ENCODE measurements at regions of chr16 and their contacts with region 1.

Region 1: DNA sequence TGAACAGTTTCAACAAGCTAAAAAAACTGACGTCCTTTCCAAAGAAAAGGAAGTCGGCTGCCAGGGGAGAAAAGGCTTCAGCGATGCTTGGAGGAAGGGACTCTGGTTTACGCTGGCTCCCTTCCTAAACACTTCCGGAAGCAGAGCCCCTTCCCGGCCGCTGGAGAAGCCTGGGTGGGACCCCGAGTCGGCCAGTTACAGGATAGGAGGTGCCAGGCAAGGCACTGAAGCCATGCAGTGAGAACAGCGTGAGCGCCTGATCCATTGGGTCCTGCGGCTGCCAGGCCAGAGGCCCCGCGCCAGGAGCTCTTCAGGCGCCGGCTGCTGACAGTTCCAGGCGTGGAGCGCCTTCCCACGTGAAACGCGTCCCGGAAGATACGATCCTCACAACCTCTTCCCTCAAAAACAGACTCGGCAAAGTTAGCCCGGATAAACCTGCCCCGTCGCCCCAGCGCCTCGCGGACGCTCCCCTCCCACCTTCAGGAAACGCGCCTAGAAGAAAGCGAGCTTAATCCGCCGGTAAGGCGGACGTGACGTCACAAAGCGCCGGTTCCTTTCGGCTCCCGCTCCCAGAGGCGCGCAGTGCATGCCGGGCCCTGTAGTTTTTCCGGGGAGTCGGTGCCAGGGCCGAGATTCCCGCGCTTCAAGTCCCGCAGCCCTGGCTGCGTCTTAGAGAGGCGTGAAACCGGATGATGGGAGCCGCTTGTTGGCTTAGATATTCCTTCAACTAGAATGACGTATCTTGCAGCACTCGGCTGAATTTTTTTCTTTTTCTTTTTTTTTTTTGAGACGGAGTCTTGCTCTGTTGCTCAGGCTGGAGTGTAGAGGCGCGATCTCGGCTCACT is at the start of gene ADAT1:
- DNase-seq: peak; percentile 90
- H3K4me3 ChIP-seq: peak within 1 kb of the TSS; percentile 85
- H3K27ac ChIP-seq: peak within 1 kb of the TSS; percentile 84 to 89
- H3K4me1 ChIP-seq: peaks cover 6 to 14% of the 10 kb centered on the region in 2 experiments; a peak in 3 of 4 replicates
- H3K27me3 ChIP-seq: no peaks in the 10 kb centered on the region
- CTCF ChIP-seq: no peak
- EP300 ChIP-seq: no peak
- RAD21 ChIP-seq: no peak
- polyA plus RNA-seq, gene ADAT1: 51.1 and 67.7 TPM in 2 replicates

Region 2: DNA sequence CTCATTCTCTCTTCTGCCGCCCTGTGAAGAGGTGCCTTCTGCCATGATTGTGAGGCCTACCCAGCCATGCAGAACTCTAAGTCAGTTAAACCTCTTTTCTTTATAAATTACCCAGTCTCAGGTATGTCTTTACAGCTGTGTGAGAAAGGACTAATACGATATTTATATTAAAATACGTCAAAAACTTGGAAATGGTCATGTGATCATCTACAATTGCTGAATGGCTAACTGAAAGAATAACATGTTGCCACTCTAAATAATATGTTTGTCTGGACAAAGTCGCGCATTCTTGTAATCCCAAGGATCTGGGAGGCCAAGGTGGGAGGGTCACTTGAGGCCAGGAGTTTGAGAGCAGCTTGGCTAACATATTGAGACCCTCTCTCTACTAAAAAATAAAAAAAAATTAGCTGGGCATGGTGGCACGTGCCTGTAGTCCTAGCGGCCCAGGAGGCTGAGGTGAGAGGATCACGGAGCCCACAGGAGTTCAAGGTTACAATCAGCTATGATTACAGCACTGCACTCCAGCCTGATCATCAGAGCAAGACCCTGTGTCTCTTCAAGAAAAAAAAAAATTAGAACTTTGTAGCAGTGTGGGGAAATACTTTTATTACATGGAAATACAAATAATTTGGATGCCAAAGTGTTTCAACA is 121.8 kb before region 1 on chr16:
- CTCF ChIA-PET with region 1: no interaction called
- POLR2A ChIA-PET with region 1: no interaction called
- DNase-seq: no peak
- H3K4me3 ChIP-seq: no peak overlapping the region
- H3K27ac ChIP-seq: no peak overlapping the region
- H3K4me1 ChIP-seq: peaks cover 5 to 7% of the 10 kb centered on the region in 2 experiments; a peak in 2 of 4 replicates
- H3K27me3 ChIP-seq: no peaks in the 10 kb centered on the region
- CTCF ChIP-seq: no peak
- EP300 ChIP-seq: no peak
- RAD21 ChIP-seq: no peak

Region 3: DNA sequence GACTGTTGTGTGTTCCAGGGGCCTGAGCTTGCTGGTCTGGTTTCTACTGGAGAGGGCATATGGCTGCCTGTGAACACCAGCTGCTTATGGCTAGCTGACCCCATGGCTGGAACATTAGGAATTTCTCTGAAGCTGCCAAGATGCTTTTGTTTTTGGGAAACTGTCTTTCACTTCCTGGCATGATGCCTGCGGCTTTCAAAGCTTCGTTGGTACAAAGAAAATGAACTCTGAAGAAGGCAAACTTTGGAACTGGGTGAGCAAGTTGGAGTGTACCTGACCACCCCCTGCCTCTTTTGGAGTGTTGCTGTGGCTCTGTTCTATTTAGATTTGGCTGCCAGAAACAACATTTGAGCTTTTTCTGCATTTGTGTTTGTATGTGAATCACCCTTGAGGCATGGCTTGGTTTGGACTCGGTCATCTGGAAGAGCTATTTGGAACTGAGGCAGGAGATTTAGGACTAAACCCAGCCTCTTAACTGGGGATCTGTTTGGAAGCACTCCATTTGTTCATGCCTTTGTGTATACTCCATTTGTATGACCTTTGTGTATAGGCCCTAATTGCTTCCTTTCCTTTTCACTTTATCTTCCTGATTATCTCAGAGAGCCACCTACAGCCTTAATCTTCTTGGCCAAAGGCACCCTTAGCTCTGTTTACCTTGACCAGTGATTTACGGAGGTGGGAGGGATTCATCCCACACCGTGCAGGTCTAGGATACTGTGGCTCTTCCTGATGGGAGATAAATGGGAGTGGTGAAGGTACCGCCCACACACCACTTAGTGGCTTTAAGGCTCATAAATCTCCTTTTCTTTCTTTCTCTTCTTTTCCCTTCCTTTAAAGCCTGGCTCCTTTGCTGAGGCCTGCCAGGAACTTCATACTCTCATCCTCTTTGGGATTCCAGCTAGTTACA is 110.6 kb after region 1 on chr16:
- CTCF ChIA-PET with region 1: no interaction called
- POLR2A ChIA-PET with region 1: no interaction called
- DNase-seq: no peak
- H3K4me3 ChIP-seq: 0 out of 4 replicates have a peak overlapping the region, but pooled peaks of 1 of the 2 experiments have one; percentile 9
- H3K27ac ChIP-seq: no peak overlapping the region
- H3K4me1 ChIP-seq: peaks cover 0 to 7% of the 10 kb centered on the region in 2 experiments; a peak in 2 of 4 replicates
- H3K27me3 ChIP-seq: no peaks in the 10 kb centered on the region
- CTCF ChIP-seq: no peak
- EP300 ChIP-seq: no peak
- RAD21 ChIP-seq: no peak

Region 4: DNA sequence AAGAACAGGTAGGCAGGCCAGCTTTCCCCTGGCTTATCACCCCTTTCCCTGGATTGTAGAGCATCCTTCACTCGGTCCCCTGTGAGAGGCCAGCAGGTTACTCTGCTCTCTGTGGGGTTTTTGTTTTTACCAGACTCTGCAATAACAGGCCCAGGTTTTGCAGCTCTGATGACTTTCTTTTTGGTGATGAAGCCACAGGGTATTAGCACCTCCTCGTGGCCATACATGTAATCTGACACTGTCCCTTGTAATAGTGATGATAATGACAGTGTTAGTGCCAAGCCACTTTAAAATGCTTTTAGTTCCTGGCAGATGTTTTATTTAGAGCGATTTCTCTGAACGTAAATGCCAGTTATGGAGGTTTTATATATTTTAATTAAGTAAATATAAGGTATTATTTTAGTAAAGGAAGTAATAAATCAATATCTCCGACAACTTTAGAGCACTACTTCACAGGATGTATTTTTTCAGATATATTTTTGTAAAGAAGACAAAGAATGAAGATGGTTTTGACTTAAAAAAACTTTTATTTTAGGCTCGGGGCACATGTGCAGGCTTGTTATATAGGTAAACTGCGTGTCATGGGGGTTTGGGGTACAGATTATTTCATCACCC is 141.3 kb after region 1 on chr16:
- CTCF ChIA-PET with region 1: interaction called, 15 read pairs
- POLR2A ChIA-PET with region 1: no interaction called
- DNase-seq: peak; percentile 74
- H3K4me3 ChIP-seq: peak overlapping the region in 1 of 2 experiments; percentile 17; a peak in 1 of 4 replicates
- H3K27ac ChIP-seq: no peak overlapping the region
- H3K4me1 ChIP-seq: no peaks in the 10 kb centered on the region
- H3K27me3 ChIP-seq: no peaks in the 10 kb centered on the region
- CTCF ChIP-seq: peak; percentile 78
- EP300 ChIP-seq: no peak
- RAD21 ChIP-seq: peak; percentile 97